ENCODE measurements at regions of chr1 and their contacts with region 1.

Region 1: GRCh38 chr1:64895500-64895899 is 70.8 kb downstream of the JAK1 start:
- DNase-seq: no peak
- ATAC-seq: peak; percentile 54
- H3K4me3 ChIP-seq: no peak overlapping the region
- H3K4me3 Mint-ChIP-seq: peak overlapping the region in 8 of 10 donors; percentile 7 to 62 (median 36)
- H3K27ac ChIP-seq: no peak overlapping the region
- H3K27ac Mint-ChIP-seq: peak overlapping the region in 5 of 9 donors; percentile 1 to 48 (median 43)
- H3K4me1 ChIP-seq: peaks cover 70 to 79% of the 10 kb centered on the region in 2 donors
- H3K4me1 Mint-ChIP-seq: peaks cover 68 to 100% (median 97%) of the 10 kb centered on the region in 7 donors
- H3K27me3 ChIP-seq: no peaks in the 10 kb centered on the region
- H3K27me3 Mint-ChIP-seq: no peaks in the 10 kb centered on the region

Region 2: GRCh38 chr1:64928325-64928724 is 32.8 kb after region 1 on chr1:
- CTCF ChIA-PET with region 1: no interaction called
- POLR2A ChIA-PET with region 1: no interaction called
- intact Hi-C with region 1: loop called in 1 of 2 experiments (anchors 5 kb)
- DNase-seq: no peak
- ATAC-seq: no peak
- H3K4me3 ChIP-seq: no peak overlapping the region
- H3K4me3 Mint-ChIP-seq: peak overlapping the region in 9 of 10 donors; percentile 22 to 66 (median 57)
- H3K27ac ChIP-seq: no peak overlapping the region
- H3K27ac Mint-ChIP-seq: peak overlapping the region in 8 of 9 donors; percentile 17 to 73 (median 41)
- H3K4me1 ChIP-seq: peaks cover 53 to 57% of the 10 kb centered on the region in 2 donors
- H3K4me1 Mint-ChIP-seq: peaks cover 63 to 95% (median 89%) of the 10 kb centered on the region in 7 donors
- H3K27me3 ChIP-seq: no peaks in the 10 kb centered on the region
- H3K27me3 Mint-ChIP-seq: no peaks in the 10 kb centered on the region